H1 (cell line): ENCODE measurements at regions of chr7 and their contacts with region 1.

Region 1: GRCh38 chr7:142478479-142479072 is 220.7 kb upstream of the PRSS58 start:
- DNase-seq: no peak
- H3K4me3 ChIP-seq: no peak overlapping the region
- H3K27ac ChIP-seq: no peak overlapping the region
- H3K4me1 ChIP-seq: peaks cover 0 to 2% (median 0%) of the 10 kb centered on the region in 4 experiments; a peak in 1 of 7 replicates
- H3K27me3 ChIP-seq: no peaks in the 10 kb centered on the region
- CTCF ChIP-seq: peak; percentile 48 to 76 (median 69)
- EP300 ChIP-seq: no peak
- POLR2A ChIP-seq: no peak
- RAD21 ChIP-seq: peak; percentile 41 to 54

Region 2: DNA sequence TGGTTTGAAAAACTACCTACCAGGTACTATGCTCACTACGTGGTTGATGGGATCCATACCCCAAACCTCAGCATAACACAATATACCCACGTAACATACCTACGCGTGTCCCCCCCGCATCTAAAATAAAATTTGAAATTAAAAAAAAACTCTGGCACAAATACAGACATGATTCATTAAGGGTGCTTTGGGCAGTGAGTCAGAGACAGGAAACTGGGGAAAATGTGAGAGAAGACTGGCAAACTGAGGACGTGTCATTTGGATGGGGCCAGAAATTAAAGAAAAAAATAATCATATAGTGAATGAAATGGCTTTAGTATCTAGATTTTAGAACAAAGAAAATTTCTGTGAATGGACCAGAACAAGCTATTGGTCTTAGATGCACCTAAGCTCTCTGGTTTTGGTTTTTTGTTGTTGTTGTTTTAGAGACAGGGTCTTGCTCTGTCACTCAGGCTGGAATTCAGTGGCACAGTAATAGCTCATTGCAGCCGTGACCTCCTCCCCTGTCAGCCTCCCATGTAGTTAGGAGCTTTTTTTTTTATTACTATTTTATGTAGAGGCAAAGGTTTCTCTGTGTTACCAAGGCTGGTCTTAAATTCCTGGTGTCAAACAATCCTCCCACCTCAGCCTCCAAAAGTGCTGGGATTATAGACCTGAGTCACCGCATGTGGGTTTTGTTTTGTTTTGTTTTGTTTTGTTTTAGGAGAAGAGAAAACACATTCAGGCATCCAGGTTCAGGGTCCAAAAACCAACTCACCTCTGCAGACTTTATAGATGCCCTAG is 214.8 kb before region 1 on chr7:
- CTCF ChIA-PET with region 1: no interaction called
- POLR2A ChIA-PET with region 1: no interaction called
- DNase-seq: no peak
- H3K4me3 ChIP-seq: no peak overlapping the region
- H3K27ac ChIP-seq: no peak overlapping the region
- H3K4me1 ChIP-seq: no peaks in the 10 kb centered on the region
- H3K27me3 ChIP-seq: no peaks in the 10 kb centered on the region
- CTCF ChIP-seq: no peak
- EP300 ChIP-seq: no peak
- POLR2A ChIP-seq: no peak
- RAD21 ChIP-seq: no peak

Region 3: DNA sequence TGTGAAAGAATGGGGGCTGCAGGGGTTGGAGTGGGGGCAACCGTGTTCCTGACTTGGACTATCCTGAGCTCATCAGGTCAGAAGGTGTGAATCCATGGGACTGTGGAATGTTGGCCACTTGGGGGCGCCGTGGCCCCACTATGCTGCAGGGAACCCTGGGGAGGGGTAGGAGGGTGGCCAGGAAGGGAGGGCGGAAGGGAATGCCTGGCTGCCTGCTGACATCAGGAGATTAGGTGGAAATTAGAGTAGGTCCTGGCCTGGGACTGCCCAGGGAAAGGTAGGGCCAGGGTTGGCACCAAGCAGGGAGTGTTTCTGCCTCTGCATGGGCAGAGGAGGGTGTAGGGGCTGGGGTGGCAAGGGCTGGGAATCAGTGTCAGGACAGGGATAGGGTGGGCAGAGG is 154.9 kb before region 1 on chr7:
- CTCF ChIA-PET with region 1: interaction called, 16 read pairs
- POLR2A ChIA-PET with region 1: no interaction called
- DNase-seq: peak; percentile 50 to 90
- H3K4me3 ChIP-seq: no peak overlapping the region
- H3K27ac ChIP-seq: no peak overlapping the region
- H3K4me1 ChIP-seq: peaks cover 0 to 6% (median 1%) of the 10 kb centered on the region in 4 experiments; a peak in 4 of 7 replicates
- H3K27me3 ChIP-seq: no peaks in the 10 kb centered on the region
- CTCF ChIP-seq: peak; percentile 81 to 92 (median 87)
- EP300 ChIP-seq: 0 out of 3 replicates have a peak, but pooled peaks of 1 of the 2 experiments have one; percentile 24
- POLR2A ChIP-seq: no peak
- RAD21 ChIP-seq: peak; percentile 81 to 88

Region 4: GRCh38 chr7:142375666-142376313 is 102.8 kb before region 1 on chr7:
- CTCF ChIA-PET with region 1: interaction called, 20 read pairs
- POLR2A ChIA-PET with region 1: no interaction called
- DNase-seq: peak; percentile 43 to 83
- H3K4me3 ChIP-seq: no peak overlapping the region
- H3K27ac ChIP-seq: no peak overlapping the region
- H3K4me1 ChIP-seq: peaks cover 0 to 14% (median 5%) of the 10 kb centered on the region in 4 experiments; a peak in 6 of 7 replicates
- H3K27me3 ChIP-seq: no peaks in the 10 kb centered on the region
- CTCF ChIP-seq: peak; percentile 72 to 87 (median 85)
- EP300 ChIP-seq: no peak
- POLR2A ChIP-seq: no peak
- RAD21 ChIP-seq: peak; percentile 77 to 86

Region 5: GRCh38 chr7:142412551-142413193 is 65.9 kb before region 1 on chr7:
- CTCF ChIA-PET with region 1: interaction called, 78 read pairs
- POLR2A ChIA-PET with region 1: no interaction called
- DNase-seq: peak; percentile 36 to 55
- H3K4me3 ChIP-seq: no peak overlapping the region
- H3K27ac ChIP-seq: no peak overlapping the region
- H3K4me1 ChIP-seq: peaks cover 0 to 3% (median 0%) of the 10 kb centered on the region in 4 experiments; a peak in 2 of 7 replicates
- H3K27me3 ChIP-seq: no peaks in the 10 kb centered on the region
- CTCF ChIP-seq: peak; percentile 78 to 96 (median 84)
- EP300 ChIP-seq: no peak
- POLR2A ChIP-seq: no peak
- RAD21 ChIP-seq: peak; percentile 56 to 70

Region 6: GRCh38 chr7:142451296-142451695 is 27.3 kb before region 1 on chr7:
- CTCF ChIA-PET with region 1: interaction called, 682 read pairs
- POLR2A ChIA-PET with region 1: no interaction called
- DNase-seq: no peak
- H3K4me3 ChIP-seq: no peak overlapping the region
- H3K27ac ChIP-seq: no peak overlapping the region
- H3K4me1 ChIP-seq: no peaks in the 10 kb centered on the region
- H3K27me3 ChIP-seq: no peaks in the 10 kb centered on the region
- CTCF ChIP-seq: no peak
- EP300 ChIP-seq: no peak
- POLR2A ChIP-seq: no peak
- RAD21 ChIP-seq: no peak

Region 7: GRCh38 chr7:142516038-142516501 is 37.5 kb after region 1 on chr7:
- CTCF ChIA-PET with region 1: interaction called, 665 read pairs
- POLR2A ChIA-PET with region 1: no interaction called
- DNase-seq: peak in 1 of 2 experiments; percentile 56
- H3K4me3 ChIP-seq: no peak overlapping the region
- H3K27ac ChIP-seq: no peak overlapping the region
- H3K4me1 ChIP-seq: peaks cover 0 to 3% (median 0%) of the 10 kb centered on the region in 4 experiments; a peak in 1 of 7 replicates
- H3K27me3 ChIP-seq: no peaks in the 10 kb centered on the region
- CTCF ChIP-seq: peak; percentile 53 to 81 (median 75)
- EP300 ChIP-seq: no peak
- POLR2A ChIP-seq: no peak
- RAD21 ChIP-seq: peak; percentile 61 to 67

Region 8: DNA sequence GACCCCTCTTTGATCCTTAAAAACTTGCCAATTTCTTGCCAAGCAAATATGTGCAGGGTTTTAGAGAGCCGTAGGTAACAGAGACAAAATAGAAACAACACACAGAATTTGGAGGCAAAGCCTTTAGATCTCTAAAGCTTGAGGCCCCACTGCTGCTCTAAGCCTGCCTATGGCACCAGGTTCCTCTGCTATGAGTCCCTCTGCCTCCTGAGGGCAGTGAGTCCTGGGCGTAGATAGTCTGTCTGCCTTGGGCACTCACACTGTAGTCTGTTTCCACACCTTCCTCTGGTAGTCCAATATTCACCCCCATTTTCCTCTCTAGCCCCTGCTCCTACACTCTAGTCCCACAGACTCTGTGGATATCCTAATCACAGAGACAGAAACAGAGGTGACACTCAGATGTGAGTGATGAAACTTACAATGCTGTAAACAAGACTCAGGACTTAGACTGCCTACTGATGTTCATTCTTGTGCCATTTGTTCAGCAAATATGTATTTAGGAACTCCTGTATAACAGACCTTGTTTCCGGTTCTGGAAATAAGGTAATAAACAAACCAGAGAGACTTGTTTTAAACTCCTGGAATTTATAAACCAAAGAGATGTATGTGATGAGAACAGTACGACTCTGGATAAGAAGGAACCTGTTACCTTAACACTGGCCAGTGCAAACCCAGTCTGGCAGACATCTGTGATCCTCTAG is 117.4 kb after region 1 on chr7:
- CTCF ChIA-PET with region 1: no interaction called
- POLR2A ChIA-PET with region 1: no interaction called
- DNase-seq: no peak
- H3K4me3 ChIP-seq: no peak overlapping the region
- H3K27ac ChIP-seq: no peak overlapping the region
- H3K4me1 ChIP-seq: no peaks in the 10 kb centered on the region
- H3K27me3 ChIP-seq: no peaks in the 10 kb centered on the region
- CTCF ChIP-seq: no peak
- EP300 ChIP-seq: no peak
- POLR2A ChIP-seq: no peak
- RAD21 ChIP-seq: no peak

Region 9: GRCh38 chr7:143222782-143223181 is 744.2 kb after region 1 on chr7:
- CTCF ChIA-PET with region 1: no interaction called
- POLR2A ChIA-PET with region 1: no interaction called
- DNase-seq: no peak
- H3K4me3 ChIP-seq: no peak overlapping the region
- H3K27ac ChIP-seq: no peak overlapping the region
- H3K4me1 ChIP-seq: no peaks in the 10 kb centered on the region
- H3K27me3 ChIP-seq: no peaks in the 10 kb centered on the region
- CTCF ChIP-seq: no peak
- EP300 ChIP-seq: no peak
- POLR2A ChIP-seq: no peak
- RAD21 ChIP-seq: no peak